Activated CD4-positive, alpha-beta T cell treated with anti-CD3 and anti-CD28 coated beads for 36 hours (primary cell): ENCODE measurements at regions of chr2 and their contacts with region 1.

Region 1: GRCh38 chr2:197499594-197500526 is at the starts of genes HSPD1 and HSPE1:
- DNase-seq: peak; percentile 99
- ATAC-seq: peak; percentile 88
- H3K4me3 Mint-ChIP-seq: peak within 1 kb of the TSS; percentile 92
- H3K27ac Mint-ChIP-seq: peak within 1 kb of the TSS; percentile 97
- H3K4me1 Mint-ChIP-seq: peaks cover 57% of the 10 kb centered on the region
- H3K27me3 Mint-ChIP-seq: no peaks in the 10 kb centered on the region
- total RNA-seq, gene HSPD1: 872 to 1,138 TPM
- total RNA-seq, gene HSPE1: 250 to 356 TPM

Region 2: DNA sequence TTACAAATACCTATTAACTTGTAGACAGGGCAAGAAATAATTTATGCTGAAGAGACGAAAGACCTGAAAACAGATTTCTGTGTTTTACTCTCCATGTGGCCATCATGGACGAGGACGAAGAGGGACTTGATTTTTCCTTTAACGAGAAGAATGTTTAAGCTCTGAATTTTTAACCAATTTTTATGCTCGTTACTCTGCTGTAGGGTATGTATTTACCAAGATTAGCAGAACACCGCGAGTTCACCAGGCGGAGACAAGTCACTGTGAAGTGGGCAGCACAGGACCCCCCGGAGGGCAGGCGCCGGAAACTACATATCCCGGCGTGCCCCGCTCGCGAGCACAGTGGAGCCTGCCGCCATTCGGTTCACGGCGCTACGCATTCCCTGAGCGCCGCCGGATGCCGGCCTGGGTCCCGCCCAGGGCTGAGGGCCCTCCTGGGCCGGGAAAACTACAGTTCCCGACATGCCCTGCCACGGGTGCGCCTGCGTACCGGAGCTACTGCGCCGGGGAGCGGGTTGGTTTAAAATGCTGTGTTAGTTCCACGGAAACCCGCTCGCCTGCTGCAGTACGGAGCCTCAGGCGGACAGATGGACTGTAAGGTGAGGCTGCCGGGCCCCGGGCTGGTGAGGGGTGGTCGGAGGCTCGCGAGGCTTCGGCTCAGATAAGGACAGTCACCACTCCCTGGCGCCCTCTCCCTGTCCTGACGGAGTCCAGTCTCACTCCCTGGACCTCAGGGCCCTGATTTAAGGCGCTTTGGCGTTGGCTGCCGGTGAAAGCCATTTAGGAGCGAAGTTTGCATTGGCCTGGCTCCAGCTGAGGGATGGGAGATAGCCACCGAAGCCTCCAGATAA is 860.5 kb before region 1 on chr2 and contains the start of gene CCDC150:
- CTCF ChIA-PET with region 1: no interaction called
- POLR2A ChIA-PET with region 1: no interaction called
- intact Hi-C with region 1: loop called in 1 of 2 experiments (anchors 1 kb)
- DNase-seq: peak; percentile 97
- ATAC-seq: peak; percentile 100
- H3K4me3 Mint-ChIP-seq: peak within 1 kb of the TSS; percentile 93
- H3K27ac Mint-ChIP-seq: peak within 1 kb of the TSS; percentile 69
- H3K4me1 Mint-ChIP-seq: peaks cover 14% of the 10 kb centered on the region
- H3K27me3 Mint-ChIP-seq: peaks cover 2% of the 10 kb centered on the region
- total RNA-seq, gene CCDC150: 11.8 to 14.6 TPM

Region 3: DNA sequence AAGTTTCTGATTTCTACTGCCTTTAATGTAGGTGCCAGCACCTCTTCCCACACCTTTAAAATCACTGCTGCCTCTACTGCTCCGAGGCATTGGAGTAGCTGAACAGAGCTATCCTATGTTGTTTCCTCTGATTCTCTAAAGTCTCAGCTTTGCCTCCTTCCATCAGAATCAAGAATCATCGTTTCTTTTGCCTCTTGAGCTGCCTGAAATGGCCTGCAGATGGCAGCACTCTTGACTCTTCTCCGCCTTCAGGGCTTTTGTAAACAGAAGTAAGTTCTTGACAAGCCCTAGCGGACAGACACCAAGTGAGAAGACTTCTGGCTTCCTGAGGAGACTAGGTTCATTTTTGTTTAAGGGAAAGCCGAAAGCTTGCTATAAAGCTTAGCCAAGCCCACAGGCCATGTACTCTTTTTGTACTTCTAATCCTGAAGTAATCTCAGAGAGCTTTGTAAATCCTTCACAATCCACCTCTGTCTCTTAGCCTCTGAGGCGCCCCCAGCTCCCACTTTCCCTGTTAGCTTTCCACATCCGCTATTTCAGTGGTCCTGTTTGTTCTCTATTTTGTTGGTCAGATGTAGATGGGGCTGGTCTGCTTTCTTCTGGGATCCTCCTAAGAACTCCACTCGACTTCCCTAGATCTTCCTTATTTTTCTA is 748.8 kb before region 1 on chr2:
- CTCF ChIA-PET with region 1: no interaction called
- POLR2A ChIA-PET with region 1: no interaction called
- intact Hi-C with region 1: no loop called
- DNase-seq: peak; percentile 82
- ATAC-seq: peak; percentile 95
- H3K4me3 Mint-ChIP-seq: no peak overlapping the region
- H3K27ac Mint-ChIP-seq: no peak overlapping the region
- H3K4me1 Mint-ChIP-seq: peaks cover 7% of the 10 kb centered on the region
- H3K27me3 Mint-ChIP-seq: no peaks in the 10 kb centered on the region

Region 4: DNA sequence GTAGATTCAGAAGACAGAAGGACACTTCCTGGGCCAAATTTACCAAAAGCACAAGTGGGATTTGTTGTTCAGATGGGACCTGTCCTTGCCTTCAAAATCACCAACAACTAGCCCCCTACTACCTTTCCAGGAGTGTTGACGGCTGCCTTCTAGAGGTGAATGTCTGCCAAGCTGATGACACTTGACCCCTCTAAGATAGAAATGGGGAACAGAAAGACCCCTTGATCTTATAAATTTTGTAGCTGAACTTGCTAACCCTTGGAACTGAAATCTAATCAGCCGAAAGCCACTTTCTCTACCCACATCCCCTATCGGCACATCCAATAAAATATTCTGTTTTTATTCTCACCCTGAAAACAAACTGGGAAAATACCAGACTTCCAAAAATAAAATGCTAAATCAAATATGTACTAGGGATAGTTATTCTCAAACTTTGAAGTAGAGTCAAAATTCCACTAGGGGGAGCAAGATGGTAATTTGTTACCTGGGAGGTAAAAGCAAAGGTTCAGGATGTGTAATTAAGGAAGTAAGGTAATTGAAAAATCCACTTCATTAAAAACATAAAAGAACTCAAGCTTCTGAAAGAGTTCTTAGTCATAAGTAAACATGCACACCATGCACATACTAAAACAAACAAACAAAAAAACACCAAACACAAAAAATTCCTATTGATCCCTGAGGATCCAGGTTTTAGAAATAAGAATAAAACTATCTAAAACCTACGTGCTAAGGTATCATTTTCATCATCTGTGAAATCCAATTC is 308.5 kb before region 1 on chr2:
- CTCF ChIA-PET with region 1: no interaction called
- POLR2A ChIA-PET with region 1: no interaction called
- intact Hi-C with region 1: loop called (anchors 5 kb)
- DNase-seq: no peak
- ATAC-seq: peak; percentile 54
- H3K4me3 Mint-ChIP-seq: peak overlapping the region; percentile 33
- H3K27ac Mint-ChIP-seq: peak overlapping the region; percentile 59
- H3K4me1 Mint-ChIP-seq: peaks cover 79% of the 10 kb centered on the region
- H3K27me3 Mint-ChIP-seq: no peaks in the 10 kb centered on the region

Region 5: GRCh38 chr2:197216361-197216979 is 283.4 kb before region 1 on chr2:
- CTCF ChIA-PET with region 1: no interaction called
- POLR2A ChIA-PET with region 1: no interaction called
- intact Hi-C with region 1: loop called in 1 of 2 experiments (anchors 5 kb)
- DNase-seq: no peak
- ATAC-seq: peak; percentile 54
- H3K4me3 Mint-ChIP-seq: peak overlapping the region; percentile 70
- H3K27ac Mint-ChIP-seq: peak overlapping the region; percentile 99
- H3K4me1 Mint-ChIP-seq: peaks cover 88% of the 10 kb centered on the region
- H3K27me3 Mint-ChIP-seq: no peaks in the 10 kb centered on the region

Region 6: DNA sequence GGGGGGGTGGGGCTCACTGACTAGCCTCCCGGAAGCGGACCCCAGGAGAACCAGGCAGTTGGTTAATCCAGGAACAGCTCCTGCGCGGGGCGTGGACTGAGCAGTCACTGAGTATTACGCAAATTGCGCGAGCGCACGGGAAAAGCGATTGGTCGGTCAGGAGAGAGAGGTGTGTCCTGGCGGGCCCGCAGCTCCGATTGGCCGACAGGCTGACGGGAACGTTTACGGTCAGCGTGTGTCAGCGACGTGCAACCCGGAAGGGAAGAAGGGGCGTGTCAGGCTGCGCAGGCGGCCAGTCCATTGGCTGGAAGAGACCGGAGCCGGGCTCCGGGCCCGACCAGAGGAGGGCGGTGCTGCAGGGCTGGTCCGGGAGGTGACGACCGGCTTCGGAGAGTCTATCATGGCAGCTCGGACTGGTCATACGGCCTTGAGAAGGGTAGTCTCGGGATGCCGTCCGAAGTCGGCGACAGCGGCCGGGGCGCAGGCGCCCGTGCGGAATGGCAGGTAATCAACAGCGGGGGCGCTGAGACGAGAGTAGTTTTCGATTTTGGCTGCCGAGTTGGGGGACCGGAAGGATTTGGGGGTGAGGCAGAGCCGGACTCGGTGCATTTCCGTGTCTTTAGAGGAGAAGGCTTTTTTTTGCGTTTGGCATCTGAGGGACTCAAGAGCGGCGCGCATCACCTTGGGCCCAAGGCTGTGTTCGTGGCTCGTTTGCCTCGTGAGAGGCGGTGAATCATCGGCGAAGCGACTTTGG is 46.5 kb before region 1 on chr2 and contains the start of gene COQ10B:
- CTCF ChIA-PET with region 1: interaction called, 3 read pairs
- POLR2A ChIA-PET with region 1: interaction called, 29 read pairs
- intact Hi-C with region 1: loop called (anchors 1 kb)
- DNase-seq: peak; percentile 99
- ATAC-seq: peak; percentile 93
- H3K4me3 Mint-ChIP-seq: peak within 1 kb of the TSS; percentile 90
- H3K27ac Mint-ChIP-seq: peak within 1 kb of the TSS; percentile 96
- H3K4me1 Mint-ChIP-seq: peaks cover 42% of the 10 kb centered on the region
- H3K27me3 Mint-ChIP-seq: no peaks in the 10 kb centered on the region
- total RNA-seq, gene COQ10B: 9.7 to 13.3 TPM

Region 7: DNA sequence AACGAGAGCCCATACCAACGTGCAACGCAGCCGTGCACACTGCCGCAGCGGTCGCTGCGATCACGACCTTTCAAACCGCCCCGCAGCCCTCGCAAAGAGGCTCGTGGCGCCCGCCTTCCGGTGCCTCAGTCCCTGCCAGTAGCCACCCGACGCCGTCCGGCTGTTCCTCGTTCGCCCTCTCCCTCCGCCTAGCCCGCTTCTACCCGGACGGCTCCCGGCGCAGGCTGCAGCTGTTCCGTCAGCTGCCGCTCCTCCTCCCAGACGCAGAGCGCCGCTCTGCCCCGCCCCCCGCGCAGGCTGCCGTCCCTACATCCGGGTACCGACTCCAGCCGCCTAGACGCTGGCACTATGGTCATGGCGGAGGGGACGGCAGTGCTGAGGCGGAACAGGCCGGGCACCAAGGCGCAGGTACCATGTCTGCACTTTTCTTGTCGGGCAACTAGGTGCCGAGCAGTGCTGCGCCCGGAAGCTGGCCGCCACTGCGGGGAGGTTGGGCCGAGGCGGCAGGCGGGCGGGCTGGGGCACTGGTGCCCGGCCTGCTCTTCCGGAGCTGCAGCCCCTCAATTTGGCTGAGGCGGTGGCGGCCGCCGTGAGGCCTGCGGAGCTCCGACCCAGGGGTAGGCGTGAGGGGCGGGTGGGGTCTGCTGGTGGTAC is 16.0 kb after region 1 on chr2 and contains the start of gene MOB4:
- CTCF ChIA-PET with region 1: interaction called, 11 read pairs
- POLR2A ChIA-PET with region 1: interaction called, 23 read pairs
- intact Hi-C with region 1: loop called (anchors 1 kb)
- DNase-seq: peak; percentile 97
- ATAC-seq: peak; percentile 95
- H3K4me3 Mint-ChIP-seq: peak within 1 kb of the TSS; percentile 94
- H3K27ac Mint-ChIP-seq: peak within 1 kb of the TSS; percentile 96
- H3K4me1 Mint-ChIP-seq: peaks cover 21% of the 10 kb centered on the region
- H3K27me3 Mint-ChIP-seq: no peaks in the 10 kb centered on the region
- total RNA-seq, gene MOB4: 10.8 to 17.1 TPM

Region 8: DNA sequence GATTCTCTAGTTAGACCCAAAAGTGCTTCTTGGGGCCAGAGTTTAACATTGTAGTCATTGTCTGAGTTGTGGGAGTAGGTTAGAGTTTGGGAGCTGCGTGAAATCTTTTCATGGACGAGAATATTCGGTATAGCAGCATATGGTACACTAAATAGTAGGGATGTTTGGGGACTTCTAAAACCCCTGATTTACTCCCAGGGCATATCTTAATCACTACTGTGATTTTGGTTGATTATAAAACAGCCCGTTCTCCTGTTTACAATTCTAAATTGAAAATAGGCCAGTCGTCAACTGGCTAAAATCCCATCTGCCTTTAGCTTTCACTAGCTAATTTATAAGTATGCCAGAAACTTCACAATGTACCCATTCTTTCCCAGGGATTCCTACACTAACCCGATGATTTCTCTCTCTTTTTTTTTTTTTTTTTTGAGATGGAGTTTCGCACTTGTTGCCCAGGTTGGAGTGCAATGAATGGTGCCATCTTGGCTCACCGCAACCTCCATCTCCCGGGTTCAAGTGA is 60.3 kb after region 1 on chr2:
- CTCF ChIA-PET with region 1: no interaction called
- POLR2A ChIA-PET with region 1: no interaction called
- intact Hi-C with region 1: no loop called
- DNase-seq: no peak
- ATAC-seq: no peak
- H3K4me3 Mint-ChIP-seq: no peak overlapping the region
- H3K27ac Mint-ChIP-seq: no peak overlapping the region
- H3K4me1 Mint-ChIP-seq: peaks cover under 1% of the 10 kb centered on the region
- H3K27me3 Mint-ChIP-seq: no peaks in the 10 kb centered on the region

Region 9: DNA sequence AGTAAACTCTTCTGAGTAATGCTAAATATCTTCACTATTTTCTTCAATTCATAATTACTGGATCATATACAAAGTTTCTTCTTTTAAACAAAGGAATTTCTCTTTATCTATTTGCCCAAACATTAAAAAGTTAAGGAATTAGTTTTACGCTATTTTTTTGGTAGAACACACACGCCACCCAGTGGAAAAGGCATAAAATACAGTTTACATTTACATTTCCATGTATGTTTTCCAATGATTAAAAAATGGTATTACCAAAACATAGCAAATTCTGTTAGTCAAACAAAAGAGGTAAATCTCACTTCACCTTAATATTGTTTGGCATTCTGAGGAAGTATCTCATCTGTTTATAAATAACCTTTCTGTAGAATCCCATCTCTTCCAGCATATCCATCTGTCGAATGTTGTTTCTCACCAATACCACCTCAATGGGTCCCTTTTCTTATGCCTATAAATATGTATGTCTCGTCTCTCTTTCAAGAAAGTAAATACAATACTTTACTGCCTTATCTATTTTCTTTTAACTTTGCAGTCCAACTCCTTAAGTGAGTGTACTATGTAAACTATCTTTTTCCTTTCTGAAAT is 278.1 kb after region 1 on chr2:
- CTCF ChIA-PET with region 1: no interaction called
- POLR2A ChIA-PET with region 1: no interaction called
- intact Hi-C with region 1: loop called in 1 of 2 experiments (anchors 10 kb)
- DNase-seq: peak; percentile 51
- ATAC-seq: no peak
- H3K4me3 Mint-ChIP-seq: no peak overlapping the region
- H3K27ac Mint-ChIP-seq: no peak overlapping the region
- H3K4me1 Mint-ChIP-seq: no peaks in the 10 kb centered on the region
- H3K27me3 Mint-ChIP-seq: peaks cover 6% of the 10 kb centered on the region

Region 10: GRCh38 chr2:197893403-197894177 is 393.7 kb after region 1 on chr2:
- CTCF ChIA-PET with region 1: no interaction called
- POLR2A ChIA-PET with region 1: no interaction called
- intact Hi-C with region 1: no loop called
- DNase-seq: peak; percentile 33
- ATAC-seq: peak; percentile 29
- H3K4me3 Mint-ChIP-seq: peak overlapping the region; percentile 56
- H3K27ac Mint-ChIP-seq: peak overlapping the region; percentile 90
- H3K4me1 Mint-ChIP-seq: peaks cover 66% of the 10 kb centered on the region
- H3K27me3 Mint-ChIP-seq: no peaks in the 10 kb centered on the region